BJ (cell line): ENCODE measurements at regions of chr12 and their contacts with region 1.

Region 1: GRCh38 chr12:64551698-64552097 is 58.6 kb upstream of the RASSF3 start:
- DNase-seq: peak; percentile 48
- H3K4me3 ChIP-seq: no peak overlapping the region
- H3K27me3 ChIP-seq: peaks cover 8% of the 10 kb centered on the region
- CTCF ChIP-seq: no peak

Region 2: GRCh38 chr12:64610149-64610678 is 58.5 kb after region 1 on chr12 and contains the start of gene RASSF3:
- CTCF ChIA-PET with region 1: interaction called, 15 read pairs
- POLR2A ChIA-PET with region 1: interaction called, 13 read pairs
- DNase-seq: no peak
- H3K4me3 ChIP-seq: peak within 1 kb of the TSS; percentile 66
- H3K27me3 ChIP-seq: no peaks in the 10 kb centered on the region
- CTCF ChIP-seq: no peak
- polyA plus RNA-seq, gene RASSF3: 22.3 and 27.7 TPM in 2 replicates

Region 3: GRCh38 chr12:64650762-64651161 is 99.1 kb after region 1 on chr12:
- CTCF ChIA-PET with region 1: no interaction called
- POLR2A ChIA-PET with region 1: no interaction called
- DNase-seq: peak; percentile 44
- H3K4me3 ChIP-seq: no peak overlapping the region
- H3K27me3 ChIP-seq: no peaks in the 10 kb centered on the region
- CTCF ChIP-seq: no peak

Region 4: DNA sequence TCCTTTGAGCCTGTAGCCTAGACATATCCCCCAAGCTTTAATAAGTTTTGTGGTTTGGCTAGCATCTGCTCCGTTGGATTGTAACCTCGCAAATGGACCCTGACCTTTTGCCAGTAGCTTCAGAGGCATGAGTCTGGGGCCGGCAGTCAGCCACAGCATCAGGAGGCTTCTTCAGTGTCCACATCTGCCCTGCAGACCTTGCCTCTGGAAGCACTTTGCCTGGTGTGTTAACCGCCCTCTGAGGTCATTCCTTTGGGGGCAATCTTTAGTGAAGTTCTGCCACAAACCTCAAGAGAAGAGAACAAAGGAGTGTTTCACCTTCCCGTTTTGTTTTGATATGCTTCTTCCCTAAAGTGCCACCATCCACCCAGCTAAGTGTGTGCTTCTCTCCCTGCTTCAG is 136.1 kb after region 1 on chr12:
- CTCF ChIA-PET with region 1: interaction called, 167 read pairs
- POLR2A ChIA-PET with region 1: no interaction called
- DNase-seq: peak; percentile 49
- H3K4me3 ChIP-seq: no peak overlapping the region
- H3K27me3 ChIP-seq: no peaks in the 10 kb centered on the region
- CTCF ChIP-seq: no peak